ENCODE measurements at regions of chr6 and their contacts with region 1.

Region 1: GRCh38 chr6:44172731-44173500 is 14.3 kb downstream of the CAPN11 start:
- DNase-seq: peak; percentile 90
- ATAC-seq: peak; percentile 94

Region 2: DNA sequence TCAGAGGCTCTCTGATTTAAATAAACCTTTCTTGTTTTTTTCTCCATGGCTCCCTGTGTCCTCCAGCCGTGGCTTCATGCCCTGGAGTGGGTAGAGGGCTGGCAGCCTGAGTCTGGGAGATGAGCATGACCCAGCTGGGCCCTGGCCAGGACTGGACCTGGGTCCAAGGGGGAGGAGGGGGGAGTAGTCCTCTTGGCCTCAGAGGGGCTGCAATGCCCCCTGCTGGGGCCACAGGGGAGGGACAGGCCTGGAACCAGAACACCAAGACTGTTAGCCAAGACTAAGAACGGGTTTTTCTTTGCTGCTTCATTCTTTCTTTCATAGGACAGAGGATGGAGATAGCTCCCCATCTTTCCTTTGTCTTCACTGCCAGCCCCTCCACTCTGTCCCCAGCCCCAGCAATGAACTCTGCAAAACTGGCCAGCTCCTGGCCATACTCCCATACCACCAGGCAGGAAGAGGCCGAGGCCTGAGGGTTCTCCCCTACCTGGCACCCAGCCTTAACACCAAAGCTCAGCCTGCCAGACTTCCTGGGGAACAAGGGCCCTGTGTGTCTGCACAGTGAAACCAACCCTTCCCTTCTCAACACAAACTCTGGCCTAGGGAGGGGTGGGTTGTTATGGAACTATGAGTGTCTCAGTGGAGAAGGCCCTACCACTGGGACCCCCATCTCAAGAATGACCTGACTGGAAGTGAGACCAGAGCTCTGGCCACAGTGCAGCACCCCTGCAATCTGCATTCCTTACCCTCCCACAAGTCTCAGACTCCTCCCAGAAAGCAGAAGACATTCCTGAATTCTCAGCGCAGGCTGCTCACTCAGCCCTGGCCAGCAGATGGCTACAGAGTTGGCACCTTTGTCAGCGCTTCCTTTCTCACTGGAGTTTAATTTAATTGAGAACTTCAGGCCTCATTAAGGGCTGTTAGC is 61.4 kb after region 1 on chr6:
- intact Hi-C with region 1: loop called (anchors 1 kb)
- DNase-seq: peak; percentile 89
- ATAC-seq: peak; percentile 59

Region 3: GRCh38 chr6:44338228-44339122 is 165.6 kb after region 1 on chr6:
- intact Hi-C with region 1: loop called (anchors 5 kb)
- DNase-seq: peak; percentile 74
- ATAC-seq: peak; percentile 83